Heart right ventricle (tissue), 16 donors: ENCODE measurements at regions of chr4 and their contacts with region 1.

Region 1: GRCh38 chr4:186725469-186726425 is 2.1 kb upstream of the FAT1 start:
- DNase-seq: peak; percentile 73 to 78
- ATAC-seq: peak; percentile 63 to 92 (median 86)
- H3K4me3 ChIP-seq: peak overlapping the region; percentile 56 to 87 (median 78)
- H3K27ac ChIP-seq: peak overlapping the region; percentile 41 to 97 (median 90)
- H3K4me1 ChIP-seq: peaks cover 0 to 32% (median 7%) of the 10 kb centered on the region in 9 donors
- H3K27me3 ChIP-seq: peaks cover 0 to 77% (median 21%) of the 10 kb centered on the region in 7 donors
- CTCF ChIP-seq: peak; percentile 29 to 79 (median 60)

Region 2: GRCh38 chr4:186445040-186445439 is 280.7 kb before region 1 on chr4:
- intact Hi-C with region 1: no loop called
- DNase-seq: no peak
- ATAC-seq: no peak
- H3K4me3 ChIP-seq: no peak overlapping the region
- H3K27ac ChIP-seq: no peak overlapping the region
- H3K4me1 ChIP-seq: no peaks in the 10 kb centered on the region
- H3K27me3 ChIP-seq: no peaks in the 10 kb centered on the region
- CTCF ChIP-seq: no peak

Region 3: GRCh38 chr4:186651624-186652023 is 74.1 kb before region 1 on chr4:
- intact Hi-C with region 1: loop called in 1 of 10 experiments (anchors 5 kb)
- DNase-seq: peak; percentile 54 to 86
- ATAC-seq: peak; percentile 83 to 97 (median 94)
- H3K4me3 ChIP-seq: peak overlapping the region in 9 of 10 donors; percentile 30 to 52 (median 41)
- H3K27ac ChIP-seq: peak overlapping the region in 7 of 10 donors; percentile 4 to 74 (median 46)
- H3K4me1 ChIP-seq: peaks cover 0 to 26% (median 11%) of the 10 kb centered on the region in 9 donors
- H3K27me3 ChIP-seq: peaks cover 0 to 5% (median 0%) of the 10 kb centered on the region in 7 donors
- CTCF ChIP-seq: no peak

Region 4: DNA sequence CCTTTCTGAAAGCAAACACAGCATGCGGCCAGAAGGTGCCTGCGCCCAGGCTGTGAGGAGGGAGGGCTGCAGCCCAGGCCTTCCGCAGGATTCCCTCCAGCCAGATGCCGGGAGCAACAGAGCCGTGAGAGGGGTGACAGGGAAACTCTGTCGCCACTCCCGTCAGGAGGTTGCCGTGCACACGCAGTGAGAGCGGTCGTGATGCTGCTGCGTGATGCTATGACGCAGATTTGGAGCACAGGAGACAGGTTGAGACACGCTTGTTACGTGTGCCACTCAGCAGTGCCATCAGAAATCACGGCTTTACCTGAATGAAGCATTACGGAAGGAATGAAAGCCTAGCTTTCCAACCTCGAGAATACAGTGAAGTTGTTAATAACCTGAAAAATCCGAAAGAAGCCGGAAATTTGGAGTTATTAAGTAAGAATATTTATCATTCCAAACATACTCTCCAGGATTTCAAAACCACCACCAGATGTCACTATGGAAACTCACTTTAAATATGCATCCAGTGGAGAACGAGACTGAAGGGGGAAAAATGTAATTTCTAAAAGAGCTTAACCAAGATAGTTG is 56.5 kb before region 1 on chr4:
- intact Hi-C with region 1: loop called in 9 of 10 experiments (anchors 2 to 10 kb)
- DNase-seq: no peak
- ATAC-seq: peak; percentile 46 to 80 (median 68)
- H3K4me3 ChIP-seq: peak overlapping the region in 1 of 10 donors; percentile 4
- H3K27ac ChIP-seq: peak overlapping the region in 2 of 10 donors; percentile 15 to 28
- H3K4me1 ChIP-seq: peaks cover 0 to 39% (median 24%) of the 10 kb centered on the region in 9 donors
- H3K27me3 ChIP-seq: no peaks in the 10 kb centered on the region
- CTCF ChIP-seq: peak in 8 of 9 donors; percentile 33 to 69 (median 54)

Region 5: GRCh38 chr4:186676531-186677161 is 49.1 kb before region 1 on chr4:
- intact Hi-C with region 1: loop called in 4 of 10 experiments (anchors 1 to 5 kb)
- DNase-seq: no peak
- ATAC-seq: peak; percentile 77 to 95 (median 90)
- H3K4me3 ChIP-seq: peak overlapping the region in 4 of 10 donors; percentile 2 to 27 (median 20)
- H3K27ac ChIP-seq: peak overlapping the region in 8 of 10 donors; percentile 17 to 79 (median 67)
- H3K4me1 ChIP-seq: peaks cover 0 to 38% (median 16%) of the 10 kb centered on the region in 9 donors
- H3K27me3 ChIP-seq: no peaks in the 10 kb centered on the region
- CTCF ChIP-seq: no peak

Region 6: GRCh38 chr4:186915816-186916215 is 190.1 kb after region 1 on chr4:
- intact Hi-C with region 1: no loop called
- DNase-seq: no peak
- ATAC-seq: no peak
- H3K4me3 ChIP-seq: no peak overlapping the region
- H3K27ac ChIP-seq: no peak overlapping the region
- H3K4me1 ChIP-seq: no peaks in the 10 kb centered on the region
- H3K27me3 ChIP-seq: no peaks in the 10 kb centered on the region
- CTCF ChIP-seq: no peak

Region 7: GRCh38 chr4:186936496-186937375 is 211.0 kb after region 1 on chr4:
- intact Hi-C with region 1: loop called in 4 of 10 experiments (anchors 5 to 10 kb)
- DNase-seq: no peak
- ATAC-seq: peak in 6 of 8 donors; percentile 35 to 65 (median 42)
- H3K4me3 ChIP-seq: peak overlapping the region in 2 of 10 donors; percentile 2 to 3
- H3K27ac ChIP-seq: peak overlapping the region in 7 of 10 donors; percentile 27 to 69 (median 50)
- H3K4me1 ChIP-seq: peaks cover 0 to 20% (median 0%) of the 10 kb centered on the region in 9 donors
- H3K27me3 ChIP-seq: no peaks in the 10 kb centered on the region
- CTCF ChIP-seq: peak in 2 of 9 donors; percentile 13 to 15

Region 8: GRCh38 chr4:186946682-186947294 is 221.0 kb after region 1 on chr4:
- intact Hi-C with region 1: loop called in 5 of 10 experiments (anchors 5 to 10 kb)
- DNase-seq: no peak
- ATAC-seq: peak in 1 of 8 donors; percentile 42
- H3K4me3 ChIP-seq: no peak overlapping the region
- H3K27ac ChIP-seq: peak overlapping the region in 1 of 10 donors; percentile 75
- H3K4me1 ChIP-seq: peaks cover 0 to 36% (median 11%) of the 10 kb centered on the region in 9 donors
- H3K27me3 ChIP-seq: no peaks in the 10 kb centered on the region
- CTCF ChIP-seq: peak in 3 of 9 donors; percentile 9 to 31 (median 12)

Region 9: DNA sequence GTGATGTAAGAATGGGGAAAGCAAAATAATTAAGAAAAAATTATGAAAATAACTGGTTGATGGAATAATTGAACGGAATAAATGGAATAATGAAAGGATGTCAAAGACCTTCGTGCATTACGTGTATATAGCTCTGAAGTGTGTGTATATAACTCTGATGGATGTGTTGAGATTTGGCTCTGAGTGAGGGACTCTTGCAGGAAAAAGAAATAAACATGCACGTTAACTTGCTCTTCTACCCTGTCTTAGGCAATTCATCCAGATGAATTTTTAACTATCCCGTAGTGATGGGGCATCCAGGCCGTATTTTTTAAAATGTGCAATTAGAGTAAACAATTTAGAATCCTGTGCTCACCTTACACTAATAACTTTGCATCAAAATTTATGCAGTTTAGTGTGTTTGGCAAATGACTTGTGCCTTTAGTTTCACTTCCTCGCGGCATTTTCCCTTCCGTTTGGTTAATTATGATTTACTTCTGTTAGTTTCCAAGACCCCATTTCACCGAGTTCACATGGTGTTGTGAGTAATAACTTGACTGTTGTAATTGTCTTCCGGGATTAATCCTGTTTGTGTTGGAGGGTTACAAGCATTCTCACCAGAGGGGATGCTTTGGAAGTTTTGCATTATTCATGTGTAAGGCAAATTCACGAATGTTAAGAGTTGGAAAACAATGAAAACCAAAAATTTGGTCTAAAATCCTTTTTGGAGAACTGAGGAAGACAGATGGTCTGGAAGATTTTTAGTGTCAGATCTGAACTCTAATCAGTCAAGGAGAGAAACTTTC is 254.4 kb after region 1 on chr4:
- intact Hi-C with region 1: no loop called
- DNase-seq: no peak
- ATAC-seq: no peak
- H3K4me3 ChIP-seq: peak overlapping the region in 1 of 10 donors; percentile 18
- H3K27ac ChIP-seq: no peak overlapping the region
- H3K4me1 ChIP-seq: no peaks in the 10 kb centered on the region
- H3K27me3 ChIP-seq: no peaks in the 10 kb centered on the region
- CTCF ChIP-seq: no peak

Region 10: GRCh38 chr4:187179086-187180058 is 453.6 kb after region 1 on chr4:
- intact Hi-C with region 1: loop called in 1 of 10 experiments (anchors 5 kb)
- DNase-seq: no peak
- ATAC-seq: peak in 2 of 8 donors; percentile 54 to 69
- H3K4me3 ChIP-seq: no peak overlapping the region
- H3K27ac ChIP-seq: peak overlapping the region in 6 of 10 donors; percentile 31 to 62 (median 43)
- H3K4me1 ChIP-seq: peaks cover 0 to 9% (median 0%) of the 10 kb centered on the region in 9 donors
- H3K27me3 ChIP-seq: no peaks in the 10 kb centered on the region
- CTCF ChIP-seq: no peak

Region 11: DNA sequence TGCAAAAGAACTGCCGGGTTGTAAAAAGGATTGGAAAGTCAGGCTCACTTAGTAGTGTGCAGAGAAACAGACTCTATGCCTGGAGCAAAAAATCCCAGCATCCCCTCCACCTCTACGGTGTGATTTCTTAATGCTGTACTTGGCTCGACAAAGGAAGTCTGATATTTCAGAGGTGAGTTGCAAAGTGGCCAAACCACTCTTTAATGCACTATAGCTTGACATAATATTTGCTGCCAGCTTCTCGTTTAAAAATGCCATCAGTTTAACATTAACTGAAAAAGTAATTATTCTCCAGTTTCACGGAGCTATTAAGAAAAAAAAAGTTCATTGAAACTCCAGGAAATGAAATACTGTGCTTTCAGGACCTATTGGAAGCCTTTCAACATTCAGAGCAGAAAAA is 821.6 kb after region 1 on chr4:
- intact Hi-C with region 1: no loop called
- DNase-seq: no peak
- ATAC-seq: no peak
- H3K4me3 ChIP-seq: no peak overlapping the region
- H3K27ac ChIP-seq: no peak overlapping the region
- H3K4me1 ChIP-seq: no peaks in the 10 kb centered on the region
- H3K27me3 ChIP-seq: no peaks in the 10 kb centered on the region
- CTCF ChIP-seq: no peak